CD8-positive, alpha-beta memory T cell (primary cell): ENCODE measurements at regions of chr17 and their contacts with region 1.

Region 1: DNA sequence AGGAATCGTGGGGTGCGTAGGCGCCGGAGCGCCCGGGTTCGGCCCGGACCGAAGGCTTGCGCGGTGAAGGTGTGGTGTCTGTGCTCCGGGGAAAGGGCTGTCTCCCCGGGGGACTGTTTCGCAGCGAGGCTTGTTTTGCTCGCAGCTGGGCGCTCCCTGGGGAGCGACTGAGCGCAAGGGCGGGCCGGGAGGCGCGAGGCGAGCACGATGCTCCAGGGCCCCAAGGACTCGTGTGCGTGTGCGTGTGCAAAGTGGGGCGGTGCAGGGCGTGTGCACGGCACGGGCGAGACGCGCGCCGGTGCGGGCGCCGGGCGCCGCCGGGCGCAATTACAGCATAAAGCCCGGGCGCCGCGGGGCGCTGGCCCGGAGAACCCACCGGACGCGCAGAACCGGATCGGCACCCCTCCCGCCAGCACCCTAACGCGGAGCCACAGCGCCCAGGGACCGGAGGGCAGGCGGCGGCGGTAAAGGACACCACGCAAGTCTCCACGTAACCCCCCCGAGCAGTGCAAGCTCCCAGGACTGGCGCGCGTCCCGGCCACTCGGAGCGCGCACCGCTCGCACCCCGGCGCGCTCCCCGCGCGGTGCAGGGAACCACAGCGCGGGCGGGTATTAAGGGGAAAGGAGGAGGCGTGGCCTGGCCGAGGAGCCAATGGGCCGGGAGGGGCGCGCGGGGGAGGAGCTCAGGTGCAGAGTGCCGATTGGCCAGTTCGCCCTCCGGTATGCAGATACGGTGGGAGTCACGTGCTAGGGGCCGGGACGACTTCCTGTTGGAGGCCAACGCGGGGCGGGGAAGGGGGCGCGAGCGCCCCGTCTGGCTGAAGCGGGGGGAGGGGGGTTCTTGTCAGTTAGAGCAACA is at the start of gene TNRC6C:
- DNase-seq: peak; percentile 99 to 100 (median 100)
- H3K4me3 ChIP-seq: peak within 1 kb of the TSS; percentile 83
- H3K4me3 Mint-ChIP-seq: peak within 1 kb of the TSS; percentile 93 to 98 (median 97)
- H3K27ac ChIP-seq: peak within 1 kb of the TSS; percentile 58
- H3K27ac Mint-ChIP-seq: peak within 1 kb of the TSS; percentile 92 to 97 (median 96)
- H3K4me1 ChIP-seq: peaks cover 38% of the 10 kb centered on the region
- H3K4me1 Mint-ChIP-seq: peaks cover 39 to 48% (median 45%) of the 10 kb centered on the region in 3 donors
- H3K27me3 ChIP-seq: no peaks in the 10 kb centered on the region
- H3K27me3 Mint-ChIP-seq: peaks cover 0 to 6% of the 10 kb centered on the region in 2 donors
- total RNA-seq, gene TNRC6C: 25.9 to 28.1 TPM

Region 2: DNA sequence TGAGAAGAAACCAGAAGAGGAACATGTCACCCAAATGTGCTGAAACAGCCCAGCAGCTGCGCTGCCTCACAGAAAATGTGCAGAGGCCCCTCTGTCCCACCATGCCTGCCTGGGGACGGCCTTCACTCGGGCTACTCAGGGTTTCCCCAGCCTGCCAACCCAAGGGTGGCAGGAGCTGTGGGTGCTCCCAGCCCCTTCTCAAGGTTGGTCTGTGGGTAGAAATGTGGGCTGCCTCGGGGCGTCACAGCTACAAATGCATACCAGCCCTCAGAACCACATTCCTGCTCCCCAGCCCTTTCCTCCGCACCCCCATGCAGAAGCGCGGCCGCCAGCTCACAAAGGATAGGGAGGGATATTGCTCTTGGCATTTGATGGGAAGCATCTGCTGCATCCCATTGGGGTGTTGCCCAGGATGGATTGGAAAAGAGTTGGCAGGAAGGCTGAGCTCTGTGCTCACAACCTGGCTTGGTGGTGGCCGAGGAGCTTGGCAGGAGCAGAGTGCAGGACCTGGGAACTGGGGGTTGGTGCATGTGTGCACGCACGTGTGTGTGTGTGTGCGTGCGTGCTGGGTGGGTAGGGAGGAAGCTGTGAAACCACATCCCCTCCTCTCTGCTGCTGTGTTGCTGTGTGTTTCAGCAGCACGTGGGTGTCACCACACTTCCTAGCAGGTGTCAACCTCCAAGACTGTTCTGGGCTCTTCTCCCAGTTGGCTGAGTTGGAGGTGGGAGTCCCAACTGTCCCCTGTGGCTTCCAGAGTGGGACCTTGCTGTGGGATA is 512.9 kb before region 1 on chr17:
- CTCF ChIA-PET with region 1: no interaction called
- POLR2A ChIA-PET with region 1: interaction called, 14 read pairs
- DNase-seq: peak; percentile 72 to 96 (median 94)
- H3K4me3 ChIP-seq: peak overlapping the region; percentile 66
- H3K4me3 Mint-ChIP-seq: peak overlapping the region; percentile 68 to 84 (median 81)
- H3K27ac ChIP-seq: peak overlapping the region; percentile 71
- H3K27ac Mint-ChIP-seq: peak overlapping the region; percentile 87 to 100 (median 98)
- H3K4me1 ChIP-seq: peaks cover 100% of the 10 kb centered on the region
- H3K4me1 Mint-ChIP-seq: peaks cover 89 to 97% (median 97%) of the 10 kb centered on the region in 3 donors
- H3K27me3 ChIP-seq: no peaks in the 10 kb centered on the region
- H3K27me3 Mint-ChIP-seq: peaks cover 0 to 5% of the 10 kb centered on the region in 2 donors

Region 3: DNA sequence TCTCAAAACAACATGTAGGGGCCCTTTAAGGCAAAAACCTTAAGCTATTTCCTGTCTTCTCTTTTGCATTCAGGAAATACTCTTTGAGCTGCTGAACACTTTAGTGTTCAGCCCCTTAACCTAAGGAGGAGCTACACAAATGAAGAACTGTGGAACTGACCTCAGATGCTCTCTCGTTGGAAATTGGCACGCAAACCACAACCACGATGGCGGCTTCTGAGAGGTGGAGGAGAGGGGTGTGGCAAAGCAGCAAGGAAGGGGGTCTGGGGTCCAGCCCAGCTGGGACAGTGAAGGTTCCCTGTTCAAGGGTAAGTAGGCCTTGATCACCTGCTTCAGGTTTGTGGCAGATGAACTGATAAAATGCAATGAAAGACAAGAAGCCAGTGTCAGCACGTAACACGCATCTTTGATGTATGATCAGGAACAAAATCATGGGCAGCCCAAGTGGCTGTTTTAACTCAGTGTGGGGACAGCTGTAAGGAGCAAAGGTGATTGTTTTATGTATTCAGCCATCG is 291.1 kb before region 1 on chr17:
- CTCF ChIA-PET with region 1: no interaction called
- POLR2A ChIA-PET with region 1: interaction called, 21 read pairs
- DNase-seq: peak; percentile 50 to 86 (median 76)
- H3K4me3 ChIP-seq: peak overlapping the region; percentile 86
- H3K4me3 Mint-ChIP-seq: peak overlapping the region; percentile 82 to 94 (median 90)
- H3K27ac ChIP-seq: peak overlapping the region; percentile 47
- H3K27ac Mint-ChIP-seq: peak overlapping the region; percentile 75 to 99 (median 96)
- H3K4me1 ChIP-seq: peaks cover 45% of the 10 kb centered on the region
- H3K4me1 Mint-ChIP-seq: peaks cover 48 to 64% (median 55%) of the 10 kb centered on the region in 3 donors
- H3K27me3 ChIP-seq: no peaks in the 10 kb centered on the region
- H3K27me3 Mint-ChIP-seq: peaks cover 0 to 1% of the 10 kb centered on the region in 2 donors

Region 4: DNA sequence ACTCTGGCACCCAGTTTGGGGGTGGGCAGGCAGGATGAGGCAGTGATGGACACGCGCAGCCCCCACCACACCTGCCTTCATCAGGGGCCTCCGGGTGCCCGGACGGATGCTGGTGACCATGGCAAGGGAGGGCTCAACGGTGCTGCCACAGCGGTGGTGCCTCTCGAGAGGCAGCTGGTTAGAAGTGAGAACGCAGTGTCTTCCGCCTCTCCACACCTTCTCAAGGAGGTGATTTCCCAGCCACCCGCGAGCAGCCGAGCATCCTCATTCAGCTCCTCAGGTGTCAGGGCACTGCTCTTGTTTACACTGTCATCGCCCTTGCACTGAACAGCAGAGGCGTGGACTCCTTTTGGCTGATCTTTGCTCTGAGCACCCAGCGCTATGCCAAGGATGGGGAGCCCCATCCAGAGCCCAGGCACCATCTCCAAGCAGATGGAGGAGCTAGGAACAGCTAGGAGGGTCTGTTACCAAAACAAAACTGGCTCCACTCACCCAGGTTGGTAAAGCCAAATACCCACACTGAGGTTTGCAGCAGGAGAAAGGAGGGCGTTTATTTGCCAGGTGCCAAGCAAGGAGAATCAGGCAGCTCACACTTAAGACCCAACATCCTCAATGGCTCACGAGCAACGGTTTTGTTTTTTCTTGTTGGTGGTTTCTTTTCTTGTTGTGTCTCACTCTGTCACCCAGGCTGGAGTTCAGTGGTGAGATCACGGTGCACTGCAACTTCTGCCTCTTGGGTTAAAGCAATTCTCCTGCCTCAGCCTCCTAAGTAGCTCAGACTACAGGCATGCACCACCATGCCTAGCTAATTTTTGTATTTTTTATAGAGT is 173.9 kb before region 1 on chr17:
- CTCF ChIA-PET with region 1: interaction called, 5 read pairs
- POLR2A ChIA-PET with region 1: interaction called, 28 read pairs
- DNase-seq: peak; percentile 44 to 90 (median 70)
- H3K4me3 ChIP-seq: peak overlapping the region; percentile 59
- H3K4me3 Mint-ChIP-seq: peak overlapping the region; percentile 55 to 82 (median 74)
- H3K27ac ChIP-seq: peak overlapping the region; percentile 95
- H3K27ac Mint-ChIP-seq: peak overlapping the region; percentile 96 to 100 (median 98)
- H3K4me1 ChIP-seq: peaks cover 35% of the 10 kb centered on the region
- H3K4me1 Mint-ChIP-seq: peaks cover 34 to 41% (median 37%) of the 10 kb centered on the region in 3 donors
- H3K27me3 ChIP-seq: no peaks in the 10 kb centered on the region
- H3K27me3 Mint-ChIP-seq: no peaks in the 10 kb centered on the region

Region 5: GRCh38 chr17:77842528-77843147 is 115.4 kb before region 1 on chr17:
- CTCF ChIA-PET with region 1: no interaction called
- POLR2A ChIA-PET with region 1: interaction called, 33 read pairs
- DNase-seq: peak in 1 of 5 donors; percentile 36
- H3K4me3 ChIP-seq: no peak overlapping the region
- H3K4me3 Mint-ChIP-seq: peak overlapping the region in 6 of 7 donors; percentile 36 to 87 (median 82)
- H3K27ac ChIP-seq: no peak overlapping the region
- H3K27ac Mint-ChIP-seq: peak overlapping the region; percentile 88 to 97 (median 94)
- H3K4me1 ChIP-seq: peaks cover 56% of the 10 kb centered on the region
- H3K4me1 Mint-ChIP-seq: peaks cover 40 to 61% (median 56%) of the 10 kb centered on the region in 3 donors
- H3K27me3 ChIP-seq: no peaks in the 10 kb centered on the region
- H3K27me3 Mint-ChIP-seq: peaks cover 0 to 2% of the 10 kb centered on the region in 2 donors

Region 6: DNA sequence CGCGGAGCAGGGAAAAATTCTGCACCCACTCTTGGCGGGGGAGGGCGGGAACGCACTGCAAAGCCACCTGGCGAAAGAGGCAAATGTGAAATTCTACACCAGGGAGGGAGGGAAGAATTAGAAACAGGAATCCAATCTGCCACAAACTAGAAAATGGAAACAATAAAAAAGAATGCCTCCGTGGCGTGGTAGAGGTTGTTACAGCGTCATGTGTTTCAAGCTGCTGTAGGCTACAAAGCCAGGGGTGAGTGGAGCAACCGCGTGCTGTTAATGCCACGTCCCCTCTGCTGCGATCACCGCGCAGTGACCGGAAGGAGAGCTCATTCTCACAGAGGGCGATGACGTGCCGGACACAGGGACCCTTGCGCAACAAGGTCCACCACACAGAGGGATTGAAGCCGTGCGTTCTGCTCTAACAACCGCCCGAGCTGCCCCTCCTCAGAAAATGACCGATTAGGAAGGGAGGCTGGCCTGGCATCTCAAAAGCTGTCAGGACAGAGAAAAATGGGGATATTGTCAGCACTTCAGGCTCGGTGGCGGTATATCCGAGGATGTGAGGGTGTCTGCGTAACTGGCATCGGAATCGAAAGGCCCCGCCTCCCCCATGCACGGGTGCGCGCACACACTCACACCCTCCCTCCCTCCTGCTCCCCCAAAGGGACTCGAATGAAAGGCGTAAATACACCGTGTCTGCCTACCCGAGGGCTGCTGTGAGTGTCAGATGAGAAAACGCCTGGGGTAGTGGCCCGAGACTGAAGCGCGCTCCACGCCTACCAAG is 70.4 kb before region 1 on chr17:
- CTCF ChIA-PET with region 1: interaction called, 15 read pairs
- POLR2A ChIA-PET with region 1: interaction called, 68 read pairs
- DNase-seq: peak; percentile 68 to 90 (median 84)
- H3K4me3 ChIP-seq: peak overlapping the region; percentile 99
- H3K4me3 Mint-ChIP-seq: peak overlapping the region; percentile 77 to 96 (median 91)
- H3K27ac ChIP-seq: peak overlapping the region; percentile 97
- H3K27ac Mint-ChIP-seq: peak overlapping the region; percentile 95 to 99 (median 99)
- H3K4me1 ChIP-seq: peaks cover 46% of the 10 kb centered on the region
- H3K4me1 Mint-ChIP-seq: peaks cover 46 to 61% (median 52%) of the 10 kb centered on the region in 3 donors
- H3K27me3 ChIP-seq: no peaks in the 10 kb centered on the region
- H3K27me3 Mint-ChIP-seq: peaks cover 0 to 2% of the 10 kb centered on the region in 2 donors

Region 7: GRCh38 chr17:78013683-78014467 is 55.8 kb after region 1 on chr17:
- CTCF ChIA-PET with region 1: interaction called, 9 read pairs
- POLR2A ChIA-PET with region 1: interaction called, 21 read pairs
- DNase-seq: peak; percentile 34 to 58 (median 37)
- H3K4me3 ChIP-seq: no peak overlapping the region
- H3K4me3 Mint-ChIP-seq: peak overlapping the region in 1 of 7 donors; percentile 33
- H3K27ac ChIP-seq: no peak overlapping the region
- H3K27ac Mint-ChIP-seq: peak overlapping the region in 4 of 8 donors; percentile 10 to 54 (median 18)
- H3K4me1 ChIP-seq: peaks cover 6% of the 10 kb centered on the region
- H3K4me1 Mint-ChIP-seq: peaks cover 28 to 36% (median 35%) of the 10 kb centered on the region in 3 donors
- H3K27me3 ChIP-seq: no peaks in the 10 kb centered on the region
- H3K27me3 Mint-ChIP-seq: no peaks in the 10 kb centered on the region

Region 8: DNA sequence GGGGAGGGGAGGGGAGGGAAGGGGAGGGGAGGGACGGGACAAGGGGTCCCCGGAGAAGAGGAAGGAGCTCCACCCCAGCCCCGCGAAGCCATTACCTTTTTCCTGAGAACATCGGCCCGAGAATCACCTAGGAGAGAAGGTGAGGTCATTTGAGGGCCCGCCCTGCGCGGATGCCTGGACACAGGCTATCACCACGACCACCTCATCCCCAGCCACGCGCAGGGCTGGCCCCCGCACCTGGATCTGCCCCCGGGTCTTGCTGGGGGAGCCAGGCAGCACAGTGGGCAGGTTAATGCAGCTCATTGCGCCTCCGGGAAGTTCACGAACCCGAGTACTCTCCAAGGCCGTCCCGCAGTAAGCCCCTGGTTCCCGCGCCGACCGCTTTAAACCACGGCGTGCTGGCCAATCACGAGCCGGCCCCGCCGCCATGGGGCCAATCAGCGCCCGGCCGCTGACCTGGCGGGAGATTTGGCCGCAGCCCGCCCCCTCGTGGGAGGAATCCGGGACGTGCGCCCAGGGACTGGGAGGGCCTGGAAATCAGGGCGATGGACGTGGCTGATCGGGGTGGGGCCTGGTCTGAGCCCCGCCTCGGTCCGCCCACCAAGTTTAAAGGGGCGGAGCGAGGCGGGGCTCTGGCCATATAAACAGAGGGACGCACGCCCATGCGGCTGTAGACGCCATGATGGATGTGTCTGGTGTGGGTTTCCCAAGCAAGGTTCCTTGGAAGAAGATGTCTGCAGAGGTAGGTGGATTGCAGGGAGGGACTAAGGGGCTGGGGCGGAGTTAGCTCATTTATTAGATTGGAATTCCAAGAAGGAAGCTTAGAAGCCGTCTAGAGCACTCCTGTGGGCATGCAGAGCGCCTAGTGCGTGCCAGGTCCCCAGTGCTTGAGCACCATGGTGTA is 228.9 kb after region 1 on chr17 and contains the starts of genes AFMID and TK1:
- CTCF ChIA-PET with region 1: no interaction called
- POLR2A ChIA-PET with region 1: no interaction called
- DNase-seq: peak; percentile 64 to 81 (median 68)
- H3K4me3 ChIP-seq: peak within 1 kb of the TSS; percentile 76
- H3K4me3 Mint-ChIP-seq: peak within 1 kb of the TSS; percentile 74 to 87 (median 84)
- H3K27ac ChIP-seq: peak within 1 kb of the TSS; percentile 54
- H3K27ac Mint-ChIP-seq: peak within 1 kb of the TSS in 3 of 8 donors; percentile 38 to 82 (median 72)
- H3K4me1 ChIP-seq: peaks cover 6% of the 10 kb centered on the region
- H3K4me1 Mint-ChIP-seq: peaks cover 10 to 18% (median 17%) of the 10 kb centered on the region in 3 donors
- H3K27me3 ChIP-seq: no peaks in the 10 kb centered on the region
- H3K27me3 Mint-ChIP-seq: no peaks in the 10 kb centered on the region
- total RNA-seq, gene AFMID: 24.7 to 30.2 TPM
- total RNA-seq, gene TK1: 84.4 to 86.2 TPM